CD4-positive, alpha-beta memory T cell (primary cell): ENCODE measurements at regions of chr16 and their contacts with region 1.

Region 1: GRCh38 chr16:25051406-25052150 is 36.4 kb upstream of the ARHGAP17 start:
- DNase-seq: peak in 1 of 5 donors; percentile 34
- H3K4me3 ChIP-seq: peak overlapping the region in 1 of 2 donors; percentile 4
- H3K4me3 Mint-ChIP-seq: peak overlapping the region; percentile 48 to 91 (median 74)
- H3K27ac ChIP-seq: peak overlapping the region; percentile 37
- H3K27ac Mint-ChIP-seq: peak overlapping the region; percentile 77 to 98 (median 88)
- H3K4me1 ChIP-seq: peaks cover 49% of the 10 kb centered on the region
- H3K4me1 Mint-ChIP-seq: peaks cover 37 to 61% (median 47%) of the 10 kb centered on the region in 4 donors
- H3K27me3 ChIP-seq: no peaks in the 10 kb centered on the region
- H3K27me3 Mint-ChIP-seq: no peaks in the 10 kb centered on the region

Region 2: GRCh38 chr16:25014500-25015147 is 37.0 kb before region 1 on chr16:
- CTCF ChIA-PET with region 1: interaction called, 12 read pairs
- POLR2A ChIA-PET with region 1: interaction called, 123 read pairs
- intact Hi-C with region 1: loop called (anchors 1 kb)
- DNase-seq: peak in 4 of 5 donors; percentile 15 to 48 (median 26)
- H3K4me3 ChIP-seq: peak overlapping the region; percentile 57 to 71
- H3K4me3 Mint-ChIP-seq: peak overlapping the region; percentile 88 to 99 (median 97)
- H3K27ac ChIP-seq: peak overlapping the region; percentile 89
- H3K27ac Mint-ChIP-seq: peak overlapping the region; percentile 92 to 99 (median 97)
- H3K4me1 ChIP-seq: peaks cover 72% of the 10 kb centered on the region
- H3K4me1 Mint-ChIP-seq: peaks cover 58 to 85% (median 73%) of the 10 kb centered on the region in 4 donors
- H3K27me3 ChIP-seq: no peaks in the 10 kb centered on the region
- H3K27me3 Mint-ChIP-seq: no peaks in the 10 kb centered on the region

Region 3: GRCh38 chr16:25031441-25032307 is 19.9 kb before region 1 on chr16:
- CTCF ChIA-PET with region 1: interaction called, 21 read pairs
- POLR2A ChIA-PET with region 1: interaction called, 101 read pairs
- intact Hi-C with region 1: loop called (anchors 1 kb)
- DNase-seq: peak; percentile 90 to 96 (median 94)
- H3K4me3 ChIP-seq: peak overlapping the region; percentile 26 to 75
- H3K4me3 Mint-ChIP-seq: peak overlapping the region; percentile 91 to 98 (median 96)
- H3K27ac ChIP-seq: peak overlapping the region; percentile 70
- H3K27ac Mint-ChIP-seq: peak overlapping the region; percentile 85 to 97 (median 96)
- H3K4me1 ChIP-seq: peaks cover 17% of the 10 kb centered on the region
- H3K4me1 Mint-ChIP-seq: peaks cover 23 to 43% (median 34%) of the 10 kb centered on the region in 4 donors
- H3K27me3 ChIP-seq: no peaks in the 10 kb centered on the region
- H3K27me3 Mint-ChIP-seq: no peaks in the 10 kb centered on the region

Region 4: GRCh38 chr16:25111403-25112166 is 60.0 kb after region 1 on chr16 and contains the start of gene LCMT1:
- CTCF ChIA-PET with region 1: interaction called, 127 read pairs
- POLR2A ChIA-PET with region 1: interaction called, 96 read pairs
- intact Hi-C with region 1: loop called (anchors 1 kb)
- DNase-seq: peak; percentile 92 to 97 (median 94)
- H3K4me3 ChIP-seq: peak within 1 kb of the TSS; percentile 71 to 79
- H3K4me3 Mint-ChIP-seq: peak within 1 kb of the TSS; percentile 94 to 99 (median 96)
- H3K27ac ChIP-seq: peak within 1 kb of the TSS; percentile 64
- H3K27ac Mint-ChIP-seq: peak within 1 kb of the TSS; percentile 65 to 97 (median 96)
- H3K4me1 ChIP-seq: peaks cover 50% of the 10 kb centered on the region
- H3K4me1 Mint-ChIP-seq: peaks cover 43 to 66% (median 53%) of the 10 kb centered on the region in 4 donors
- H3K27me3 ChIP-seq: no peaks in the 10 kb centered on the region
- H3K27me3 Mint-ChIP-seq: no peaks in the 10 kb centered on the region
- total RNA-seq, gene LCMT1: 37.0 to 37.9 TPM

Region 5: DNA sequence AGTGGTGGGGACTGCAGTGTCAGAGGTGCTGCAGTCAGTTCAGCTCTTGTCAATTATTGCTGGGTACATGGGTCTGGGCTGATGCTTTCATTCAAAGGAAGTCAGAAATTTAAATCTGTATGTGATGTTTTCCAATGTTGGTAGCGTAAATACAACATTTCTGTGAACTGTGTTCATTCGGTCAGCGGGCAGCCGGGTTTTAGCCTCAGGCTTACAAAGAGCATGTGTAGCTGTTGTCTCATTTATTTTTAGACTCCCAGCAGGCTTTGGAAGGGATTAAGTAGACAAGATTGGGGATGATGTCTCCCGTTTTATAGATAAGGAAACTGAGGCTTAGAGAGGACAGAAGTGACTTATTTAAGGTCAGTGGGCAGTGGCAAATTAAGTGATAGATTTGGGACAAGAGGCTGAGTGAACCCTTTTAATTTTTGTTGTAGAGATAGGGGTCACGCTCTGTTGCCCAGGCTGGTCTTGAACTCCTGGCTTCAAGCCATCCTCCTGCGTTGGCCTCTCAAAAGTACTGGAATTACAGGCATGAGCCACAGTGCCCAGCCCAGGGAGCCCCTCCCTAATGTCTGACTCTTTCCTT is 173.2 kb after region 1 on chr16:
- CTCF ChIA-PET with region 1: interaction called, 86 read pairs
- POLR2A ChIA-PET with region 1: interaction called, 10 read pairs
- intact Hi-C with region 1: no loop called
- DNase-seq: no peak
- H3K4me3 ChIP-seq: no peak overlapping the region
- H3K4me3 Mint-ChIP-seq: no peak overlapping the region
- H3K27ac ChIP-seq: no peak overlapping the region
- H3K27ac Mint-ChIP-seq: peak overlapping the region in 2 of 7 donors; percentile 54 to 85
- H3K4me1 ChIP-seq: no peaks in the 10 kb centered on the region
- H3K4me1 Mint-ChIP-seq: peaks cover 0 to 1% (median under 1%) of the 10 kb centered on the region in 4 donors
- H3K27me3 ChIP-seq: no peaks in the 10 kb centered on the region
- H3K27me3 Mint-ChIP-seq: no peaks in the 10 kb centered on the region